Endothelial cell of umbilical vein (primary cell): ENCODE measurements at regions of chr3 and their contacts with region 1.

Region 1: GRCh38 chr3:190321789-190322603 is at the start of gene CLDN1:
- DNase-seq: peak; percentile 67
- H3K4me3 ChIP-seq: peak within 1 kb of the TSS in 2 of 3 experiments; percentile 9 to 46
- H3K27ac ChIP-seq: no peak within 1 kb of the TSS
- H3K4me1 ChIP-seq: peaks cover 4% of the 10 kb centered on the region
- H3K27me3 ChIP-seq: peaks cover 2 to 10% of the 10 kb centered on the region in 2 experiments
- CTCF ChIP-seq: peak; percentile 93 to 98
- POLR2A ChIP-seq: no peak
- total RNA-seq, gene CLDN1: 0.27 and 0.32 TPM in 2 replicates

Region 2: GRCh38 chr3:189517981-189518380 is 804.0 kb before region 1 on chr3:
- CTCF ChIA-PET with region 1: no interaction called
- POLR2A ChIA-PET with region 1: no interaction called
- dilution Hi-C with region 1: no loop called
- intact Hi-C with region 1: no loop called
- DNase-seq: no peak
- H3K4me3 ChIP-seq: no peak overlapping the region
- H3K27ac ChIP-seq: no peak overlapping the region
- H3K4me1 ChIP-seq: no peaks in the 10 kb centered on the region
- H3K27me3 ChIP-seq: no peaks in the 10 kb centered on the region
- CTCF ChIP-seq: no peak
- POLR2A ChIP-seq: no peak

Region 3: GRCh38 chr3:189961525-189962161 is 360.4 kb before region 1 on chr3:
- CTCF ChIA-PET with region 1: interaction called, 90 read pairs
- POLR2A ChIA-PET with region 1: no interaction called
- dilution Hi-C with region 1: loop called (anchors 25 kb)
- intact Hi-C with region 1: loop called (anchors 1 kb)
- DNase-seq: peak; percentile 89
- H3K4me3 ChIP-seq: no peak overlapping the region
- H3K27ac ChIP-seq: no peak overlapping the region
- H3K4me1 ChIP-seq: no peaks in the 10 kb centered on the region
- H3K27me3 ChIP-seq: no peaks in the 10 kb centered on the region
- CTCF ChIP-seq: peak; percentile 77 to 90
- POLR2A ChIP-seq: no peak

Region 4: DNA sequence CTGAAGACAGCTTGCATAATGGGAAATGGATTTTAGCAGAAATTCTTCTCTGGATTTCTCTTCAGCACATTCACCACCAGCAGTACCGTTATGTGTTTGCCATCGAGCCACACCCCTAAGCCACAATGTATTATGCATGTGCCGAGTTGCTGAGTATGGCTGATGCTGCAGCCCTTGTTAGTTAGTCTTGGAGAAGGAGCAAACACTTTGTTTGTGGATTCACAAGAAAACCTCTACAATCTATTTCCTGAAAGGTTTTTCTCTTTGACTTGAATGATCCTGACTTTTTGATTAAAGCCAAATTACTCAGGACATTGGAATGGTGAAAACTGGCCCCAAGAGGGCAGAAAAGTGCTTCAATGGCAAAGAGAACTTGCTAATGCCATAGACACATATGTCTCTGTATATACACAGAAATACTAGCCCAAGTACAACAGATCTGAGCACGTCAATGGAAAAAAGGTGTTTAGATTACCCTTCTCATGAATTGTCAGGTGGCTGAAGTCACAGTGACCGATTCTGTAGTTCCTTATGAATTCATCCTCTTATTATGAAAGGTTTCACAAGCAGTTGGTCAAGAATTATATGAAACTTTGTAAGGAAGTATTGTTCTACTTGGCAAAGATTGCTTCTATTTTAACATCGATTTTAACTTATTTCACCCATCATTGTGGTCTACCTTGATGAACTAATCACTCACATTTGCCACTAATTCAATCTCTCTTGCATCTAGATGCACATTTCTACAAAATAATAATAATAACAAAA is 304.3 kb before region 1 on chr3:
- CTCF ChIA-PET with region 1: interaction called, 11 read pairs
- POLR2A ChIA-PET with region 1: no interaction called
- dilution Hi-C with region 1: no loop called
- intact Hi-C with region 1: loop called (anchors 1 kb)
- DNase-seq: peak; percentile 84
- H3K4me3 ChIP-seq: no peak overlapping the region
- H3K27ac ChIP-seq: no peak overlapping the region
- H3K4me1 ChIP-seq: peaks cover 3% of the 10 kb centered on the region
- H3K27me3 ChIP-seq: no peaks in the 10 kb centered on the region
- CTCF ChIP-seq: peak; percentile 28 to 47
- POLR2A ChIP-seq: no peak

Region 5: DNA sequence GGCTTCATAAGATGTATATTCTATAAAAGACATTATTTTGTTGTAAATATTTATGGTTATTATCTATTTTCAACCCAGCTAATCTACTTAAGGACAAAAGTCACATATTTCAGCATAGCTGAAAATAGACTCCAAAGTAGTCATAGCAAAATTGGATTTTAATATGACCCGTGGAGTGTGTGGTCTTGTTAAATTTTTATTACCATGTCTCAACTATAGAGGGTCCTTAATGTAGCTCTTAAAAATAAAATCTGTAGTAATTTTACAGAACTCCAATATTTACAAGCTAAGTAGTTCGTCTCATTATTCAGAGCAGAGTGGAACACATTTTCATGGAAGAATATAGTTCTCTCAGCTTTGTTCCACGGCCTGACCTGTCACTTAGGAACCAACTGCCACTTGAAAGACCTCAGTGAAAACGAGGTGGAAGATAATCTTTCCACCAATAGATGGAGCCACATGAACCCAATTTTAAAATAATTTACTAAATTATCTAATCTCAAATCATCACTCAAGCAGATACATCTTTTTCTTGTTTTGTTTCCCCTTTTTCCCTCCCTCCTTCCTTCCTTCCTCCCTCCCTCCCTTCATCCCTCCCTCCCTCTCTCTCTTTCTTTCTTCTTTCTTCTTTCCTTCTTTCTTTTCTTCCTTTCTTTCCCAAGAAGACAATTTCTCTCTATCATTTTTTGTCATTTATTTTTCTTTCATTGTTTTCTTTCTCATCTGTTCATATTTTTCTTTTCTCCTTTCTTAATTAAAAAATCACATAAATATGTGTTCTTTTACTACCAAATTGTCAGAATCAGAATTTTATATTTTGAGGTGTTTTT is 96.9 kb before region 1 on chr3:
- CTCF ChIA-PET with region 1: interaction called, 167 read pairs
- POLR2A ChIA-PET with region 1: no interaction called
- dilution Hi-C with region 1: no loop called
- intact Hi-C with region 1: loop called (anchors 1 kb)
- DNase-seq: peak; percentile 58
- H3K4me3 ChIP-seq: no peak overlapping the region
- H3K27ac ChIP-seq: no peak overlapping the region
- H3K4me1 ChIP-seq: peaks cover 10% of the 10 kb centered on the region
- H3K27me3 ChIP-seq: no peaks in the 10 kb centered on the region
- CTCF ChIP-seq: peak; percentile 20 to 24
- POLR2A ChIP-seq: no peak

Region 6: DNA sequence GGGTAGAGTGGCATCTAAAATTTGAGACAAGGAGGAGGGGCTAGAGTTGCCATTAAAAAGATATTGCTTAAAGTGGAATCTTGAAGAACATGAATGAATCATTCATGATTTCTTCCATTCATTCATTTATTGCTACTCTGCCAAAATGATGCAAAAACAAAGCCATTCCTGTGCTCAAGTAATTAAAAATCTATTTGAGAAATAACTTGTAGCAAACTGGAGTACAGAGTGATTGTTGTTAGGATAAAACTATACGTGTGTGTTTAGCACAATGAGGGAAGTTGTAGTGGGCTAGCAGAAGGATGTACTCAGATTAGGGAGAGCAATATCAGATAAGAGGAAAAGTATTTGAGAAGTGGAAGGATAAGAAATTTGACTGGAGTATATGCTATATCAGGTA is 12.0 kb after region 1 on chr3:
- CTCF ChIA-PET with region 1: interaction called, 41 read pairs
- POLR2A ChIA-PET with region 1: interaction called, 3 read pairs
- dilution Hi-C with region 1: no loop called
- intact Hi-C with region 1: no loop called
- DNase-seq: no peak
- H3K4me3 ChIP-seq: no peak overlapping the region
- H3K27ac ChIP-seq: no peak overlapping the region
- H3K4me1 ChIP-seq: peaks cover 7% of the 10 kb centered on the region
- H3K27me3 ChIP-seq: no peaks in the 10 kb centered on the region
- CTCF ChIP-seq: no peak
- POLR2A ChIP-seq: no peak

Region 7: DNA sequence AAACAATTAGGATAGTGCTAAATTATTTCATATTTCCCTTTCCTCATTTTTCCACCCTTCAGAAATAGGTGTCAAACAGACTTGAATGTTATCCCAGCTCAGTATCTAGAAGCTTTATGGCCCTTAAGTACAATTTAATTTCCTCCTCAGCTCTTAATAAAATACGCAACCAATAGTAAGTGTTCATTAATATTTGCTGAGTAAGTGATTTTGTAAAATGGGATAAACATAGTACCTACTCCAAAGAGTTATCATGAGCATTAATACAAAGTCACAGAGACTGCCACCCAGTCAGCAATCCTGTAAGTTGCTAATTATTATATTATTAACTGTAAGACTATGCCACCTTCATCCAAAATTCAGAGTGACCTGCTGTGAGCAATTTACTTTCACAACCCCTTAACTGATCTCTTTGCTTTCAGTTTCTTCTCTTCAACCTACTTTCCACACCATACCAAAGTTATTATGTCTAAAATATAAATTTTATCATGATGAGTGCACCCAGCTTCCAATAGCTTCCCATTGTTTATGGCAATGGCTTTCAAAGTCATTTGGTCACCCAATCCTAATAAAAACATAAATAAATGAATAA is 31.0 kb after region 1 on chr3:
- CTCF ChIA-PET with region 1: interaction called, 15 read pairs
- POLR2A ChIA-PET with region 1: no interaction called
- dilution Hi-C with region 1: no loop called
- intact Hi-C with region 1: no loop called
- DNase-seq: no peak
- H3K4me3 ChIP-seq: no peak overlapping the region
- H3K27ac ChIP-seq: no peak overlapping the region
- H3K4me1 ChIP-seq: no peaks in the 10 kb centered on the region
- H3K27me3 ChIP-seq: no peaks in the 10 kb centered on the region
- CTCF ChIP-seq: no peak
- POLR2A ChIP-seq: no peak

Region 8: DNA sequence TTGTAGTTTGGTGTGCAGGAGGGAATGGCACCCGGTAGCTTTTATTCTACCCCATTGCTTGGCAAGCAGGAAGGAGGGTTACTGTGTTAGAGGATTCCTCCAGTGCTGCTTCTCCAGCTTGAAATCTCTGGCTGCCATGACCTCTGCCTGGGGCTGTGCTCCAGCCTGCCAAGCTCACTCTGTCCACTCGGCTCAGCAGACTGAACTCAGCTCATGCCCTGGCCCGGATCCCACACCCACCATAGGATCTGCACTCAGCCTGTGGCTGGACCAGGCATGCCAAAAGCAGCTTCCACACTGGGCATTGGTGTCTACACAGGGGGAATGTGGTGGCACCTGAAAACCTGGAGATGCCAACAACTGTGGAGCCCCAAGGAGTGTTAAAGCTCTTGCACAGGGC is 92.3 kb after region 1 on chr3:
- CTCF ChIA-PET with region 1: interaction called, 13 read pairs
- POLR2A ChIA-PET with region 1: no interaction called
- dilution Hi-C with region 1: no loop called
- intact Hi-C with region 1: no loop called
- DNase-seq: no peak
- H3K4me3 ChIP-seq: no peak overlapping the region
- H3K27ac ChIP-seq: no peak overlapping the region
- H3K4me1 ChIP-seq: no peaks in the 10 kb centered on the region
- H3K27me3 ChIP-seq: no peaks in the 10 kb centered on the region
- CTCF ChIP-seq: no peak
- POLR2A ChIP-seq: no peak